Natural killer cell (primary cell): ENCODE measurements at regions of chr11 and their contacts with region 1.

Region 1: GRCh38 chr11:44861849-44862749 is 88.6 kb downstream of the TP53I11 start:
- DNase-seq: peak; percentile 83 to 87
- ATAC-seq: peak; percentile 95 to 97 (median 96)
- H3K4me3 ChIP-seq: no peak overlapping the region
- H3K4me3 Mint-ChIP-seq: peak overlapping the region; percentile 83
- H3K27ac ChIP-seq: no peak overlapping the region
- H3K27ac Mint-ChIP-seq: peak overlapping the region; percentile 79 to 89
- H3K4me1 ChIP-seq: peaks cover 30% of the 10 kb centered on the region
- H3K4me1 Mint-ChIP-seq: peaks cover 24 to 30% of the 10 kb centered on the region in 2 donors
- H3K27me3 ChIP-seq: peaks cover 41% of the 10 kb centered on the region
- H3K27me3 Mint-ChIP-seq: peaks cover 61 to 83% of the 10 kb centered on the region in 2 donors
- CTCF ChIP-seq: no peak

Region 2: GRCh38 chr11:44565211-44565952 is 296.7 kb before region 1 on chr11 and contains the start of gene CD82:
- intact Hi-C with region 1: loop called (anchors 5 kb)
- DNase-seq: peak; percentile 92 to 97
- ATAC-seq: peak; percentile 80 to 91 (median 86)
- H3K4me3 ChIP-seq: peak within 1 kb of the TSS; percentile 73
- H3K4me3 Mint-ChIP-seq: peak within 1 kb of the TSS; percentile 82
- H3K27ac ChIP-seq: peak within 1 kb of the TSS; percentile 39
- H3K27ac Mint-ChIP-seq: peak within 1 kb of the TSS; percentile 23 to 87
- H3K4me1 ChIP-seq: peaks cover 58% of the 10 kb centered on the region
- H3K4me1 Mint-ChIP-seq: peaks cover 24 to 54% of the 10 kb centered on the region in 2 donors
- H3K27me3 ChIP-seq: no peaks in the 10 kb centered on the region
- H3K27me3 Mint-ChIP-seq: peaks cover 0 to 5% of the 10 kb centered on the region in 2 donors
- CTCF ChIP-seq: no peak
- total RNA-seq, gene CD82: 11.6 to 42.1 (median 13.0) TPM

Region 3: GRCh38 chr11:44793350-44794090 is 68.6 kb before region 1 on chr11:
- intact Hi-C with region 1: no loop called
- DNase-seq: no peak
- ATAC-seq: no peak
- H3K4me3 ChIP-seq: no peak overlapping the region
- H3K4me3 Mint-ChIP-seq: no peak overlapping the region
- H3K27ac ChIP-seq: no peak overlapping the region
- H3K27ac Mint-ChIP-seq: no peak overlapping the region
- H3K4me1 ChIP-seq: no peaks in the 10 kb centered on the region
- H3K4me1 Mint-ChIP-seq: no peaks in the 10 kb centered on the region
- H3K27me3 ChIP-seq: no peaks in the 10 kb centered on the region
- H3K27me3 Mint-ChIP-seq: peaks cover 0 to 18% of the 10 kb centered on the region in 2 donors
- CTCF ChIP-seq: no peak

Region 4: GRCh38 chr11:45079943-45080719 is 218.0 kb after region 1 on chr11:
- intact Hi-C with region 1: loop called (anchors 5 kb)
- DNase-seq: peak; percentile 45 to 83
- ATAC-seq: peak; percentile 65 to 77 (median 75)
- H3K4me3 ChIP-seq: no peak overlapping the region
- H3K4me3 Mint-ChIP-seq: peak overlapping the region; percentile 84
- H3K27ac ChIP-seq: peak overlapping the region; percentile 46
- H3K27ac Mint-ChIP-seq: peak overlapping the region; percentile 76 to 85
- H3K4me1 ChIP-seq: peaks cover 65% of the 10 kb centered on the region
- H3K4me1 Mint-ChIP-seq: peaks cover 67 to 70% of the 10 kb centered on the region in 2 donors
- H3K27me3 ChIP-seq: no peaks in the 10 kb centered on the region
- H3K27me3 Mint-ChIP-seq: peaks cover 16 to 18% of the 10 kb centered on the region in 2 donors
- CTCF ChIP-seq: no peak

Region 5: GRCh38 chr11:45092901-45093760 is 231.0 kb after region 1 on chr11:
- intact Hi-C with region 1: loop called (anchors 1 kb)
- DNase-seq: peak; percentile 64 to 67
- ATAC-seq: peak; percentile 77 to 96 (median 83)
- H3K4me3 ChIP-seq: no peak overlapping the region
- H3K4me3 Mint-ChIP-seq: peak overlapping the region; percentile 63
- H3K27ac ChIP-seq: peak overlapping the region; percentile 27
- H3K27ac Mint-ChIP-seq: peak overlapping the region; percentile 17 to 78
- H3K4me1 ChIP-seq: peaks cover 50% of the 10 kb centered on the region
- H3K4me1 Mint-ChIP-seq: peaks cover 51 to 75% of the 10 kb centered on the region in 2 donors
- H3K27me3 ChIP-seq: peaks cover 4% of the 10 kb centered on the region
- H3K27me3 Mint-ChIP-seq: peaks cover 28 to 32% of the 10 kb centered on the region in 2 donors
- CTCF ChIP-seq: no peak